Upper lobe of right lung (tissue), 1 donor: ENCODE measurements at regions of chr17 and their contacts with region 1.

Region 1: DNA sequence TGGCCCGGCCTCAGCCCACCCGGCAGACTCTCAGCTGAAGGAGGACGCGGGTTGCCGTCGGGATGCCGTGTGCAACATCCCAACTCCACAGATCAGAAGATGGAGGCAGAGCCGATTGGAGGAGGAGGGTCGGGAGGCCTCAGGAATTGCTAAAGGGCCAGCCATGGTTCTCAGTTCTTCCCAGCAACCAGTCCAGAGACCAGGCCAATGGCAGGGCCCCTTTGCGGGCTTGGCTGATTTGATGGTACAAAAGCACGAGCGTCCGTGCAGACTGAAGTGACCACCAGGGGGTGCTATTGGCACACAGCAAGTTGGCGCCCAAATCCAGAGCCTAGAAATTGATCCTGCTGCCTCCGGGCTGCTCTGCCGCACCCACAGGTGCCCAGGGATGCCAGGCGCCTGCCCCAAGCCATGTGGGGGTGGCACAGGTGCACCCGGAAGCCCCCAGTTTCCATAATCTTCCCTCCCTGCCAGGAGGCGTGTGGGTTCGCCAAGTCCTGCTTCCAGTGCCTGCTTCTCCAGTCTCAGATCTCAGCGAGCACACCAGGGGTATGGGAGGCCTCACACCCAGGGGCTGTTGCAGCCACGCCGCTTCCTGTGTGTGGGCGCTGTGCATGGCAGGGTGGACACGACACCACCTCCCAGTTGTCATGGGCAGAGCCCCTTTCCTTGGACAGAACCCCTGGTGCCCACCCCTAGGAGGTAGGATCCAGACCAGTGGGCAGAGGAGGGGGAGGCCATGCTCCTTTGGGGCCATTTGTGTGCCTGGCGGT is 7.1 kb upstream of the TEX19 start:
- DNase-seq: peak; percentile 87
- ATAC-seq: peak; percentile 85
- H3K4me3 ChIP-seq: no peak overlapping the region
- H3K27ac ChIP-seq: no peak overlapping the region
- H3K4me1 ChIP-seq: no peaks in the 10 kb centered on the region
- H3K27me3 ChIP-seq: peaks cover 14% of the 10 kb centered on the region
- CTCF ChIP-seq: peak; percentile 97

Region 2: DNA sequence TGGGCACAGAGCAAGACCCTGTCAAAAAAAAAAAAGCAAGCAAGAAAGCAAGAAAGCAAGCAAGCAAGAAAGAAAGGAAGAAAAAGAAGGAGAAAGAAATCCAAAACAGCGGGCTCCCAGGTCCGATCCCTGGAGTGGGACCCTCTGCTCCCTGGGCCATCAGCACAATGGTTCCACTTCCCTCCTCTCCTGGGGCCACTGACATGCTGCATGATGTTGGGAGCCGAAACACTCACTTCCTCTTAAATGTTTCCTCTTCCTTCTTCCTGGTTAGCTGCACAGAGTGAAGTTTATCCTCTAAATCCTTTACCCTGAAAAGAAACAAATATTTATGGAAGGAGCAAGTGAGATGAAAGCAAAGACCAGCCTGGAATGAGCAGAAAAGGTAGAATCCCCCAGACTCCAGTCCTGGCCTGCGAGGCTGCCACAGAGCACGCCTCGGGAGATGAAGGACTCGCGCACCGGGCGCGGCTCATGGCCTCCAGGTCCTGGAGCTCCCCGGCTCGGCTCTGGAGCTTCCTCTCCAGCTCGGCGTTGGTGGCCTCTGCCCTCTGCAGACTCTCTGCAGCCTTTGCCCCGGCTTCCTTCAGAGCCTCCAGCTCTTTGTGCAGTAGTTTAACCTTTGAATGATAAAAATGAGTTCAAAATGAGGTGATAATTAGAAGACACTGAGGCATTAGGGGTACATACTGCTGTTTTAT is 158.2 kb before region 1 on chr17:
- intact Hi-C with region 1: no loop called
- DNase-seq: no peak
- ATAC-seq: peak; percentile 87
- H3K4me3 ChIP-seq: peak overlapping the region; percentile 15
- H3K27ac ChIP-seq: peak overlapping the region; percentile 64
- H3K4me1 ChIP-seq: no peaks in the 10 kb centered on the region
- H3K27me3 ChIP-seq: no peaks in the 10 kb centered on the region
- CTCF ChIP-seq: no peak

Region 3: GRCh38 chr17:82292251-82293154 is 59.4 kb before region 1 on chr17:
- intact Hi-C with region 1: no loop called
- DNase-seq: peak; percentile 97
- ATAC-seq: peak; percentile 91
- H3K4me3 ChIP-seq: peak overlapping the region; percentile 98
- H3K27ac ChIP-seq: peak overlapping the region; percentile 95
- H3K4me1 ChIP-seq: peaks cover 47% of the 10 kb centered on the region
- H3K27me3 ChIP-seq: no peaks in the 10 kb centered on the region
- CTCF ChIP-seq: no peak

Region 4: DNA sequence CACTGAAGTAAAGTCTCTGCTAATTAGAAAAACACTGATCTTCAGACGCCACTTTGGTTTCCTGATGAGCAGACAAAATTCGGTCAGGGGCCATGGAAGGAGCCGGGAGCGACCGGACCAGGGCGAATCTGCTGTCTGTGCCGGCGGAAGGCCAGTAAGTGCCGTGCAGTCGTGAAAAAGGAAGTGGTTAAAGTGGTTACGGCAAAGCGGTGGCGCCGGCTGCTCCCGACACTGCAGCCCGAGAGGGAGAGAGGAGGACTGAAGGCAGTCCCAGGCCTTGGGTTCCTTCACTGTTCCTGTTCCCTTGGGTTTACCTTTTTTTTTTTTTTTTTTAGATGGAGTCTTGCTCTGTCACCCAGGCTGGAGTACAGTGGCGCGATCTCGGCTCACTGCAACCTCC is 48.9 kb after region 1 on chr17:
- intact Hi-C with region 1: loop called (anchors 10 kb)
- DNase-seq: peak; percentile 79
- ATAC-seq: peak; percentile 90
- H3K4me3 ChIP-seq: no peak overlapping the region
- H3K27ac ChIP-seq: no peak overlapping the region
- H3K4me1 ChIP-seq: peaks cover 7% of the 10 kb centered on the region
- H3K27me3 ChIP-seq: no peaks in the 10 kb centered on the region
- CTCF ChIP-seq: no peak

Region 5: GRCh38 chr17:82551779-82552457 is 200.0 kb after region 1 on chr17:
- intact Hi-C with region 1: loop called (anchors 10 kb)
- DNase-seq: peak; percentile 89
- ATAC-seq: peak; percentile 93
- H3K4me3 ChIP-seq: no peak overlapping the region
- H3K27ac ChIP-seq: no peak overlapping the region
- H3K4me1 ChIP-seq: peaks cover 56% of the 10 kb centered on the region
- H3K27me3 ChIP-seq: no peaks in the 10 kb centered on the region
- CTCF ChIP-seq: peak; percentile 84